Heart right ventricle (tissue), 16 donors: ENCODE measurements at regions of chr22 and their contacts with region 1.

Region 1: DNA sequence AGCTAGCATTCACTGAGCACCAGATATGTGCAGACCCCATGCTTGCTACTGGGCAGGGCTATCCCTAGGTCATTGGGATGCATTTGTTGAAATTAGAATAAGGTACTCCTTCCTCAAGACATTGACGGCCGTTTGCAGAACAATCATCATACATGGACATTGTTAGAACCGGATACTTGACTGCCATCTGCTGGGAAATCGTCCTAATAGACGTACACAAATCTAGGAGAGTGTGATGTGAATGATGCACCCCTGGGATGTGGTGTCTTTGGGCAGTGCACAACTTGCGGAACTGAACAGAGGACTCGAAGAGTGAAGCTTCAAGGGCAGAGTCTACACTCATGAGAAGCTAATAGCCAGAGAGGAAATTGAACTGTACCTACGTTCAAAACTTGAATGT is 35.9 kb downstream of the MYO18B start:
- DNase-seq: no peak
- ATAC-seq: peak in 2 of 8 donors; percentile 5 to 15
- H3K4me3 ChIP-seq: no peak overlapping the region
- H3K27ac ChIP-seq: no peak overlapping the region
- H3K4me1 ChIP-seq: peaks cover 0 to under 1% (median 0%) of the 10 kb centered on the region in 9 donors
- H3K27me3 ChIP-seq: peaks cover 0 to 5% (median 0%) of the 10 kb centered on the region in 7 donors
- CTCF ChIP-seq: peak in 6 of 9 donors; percentile 25 to 43 (median 30)

Region 2: DNA sequence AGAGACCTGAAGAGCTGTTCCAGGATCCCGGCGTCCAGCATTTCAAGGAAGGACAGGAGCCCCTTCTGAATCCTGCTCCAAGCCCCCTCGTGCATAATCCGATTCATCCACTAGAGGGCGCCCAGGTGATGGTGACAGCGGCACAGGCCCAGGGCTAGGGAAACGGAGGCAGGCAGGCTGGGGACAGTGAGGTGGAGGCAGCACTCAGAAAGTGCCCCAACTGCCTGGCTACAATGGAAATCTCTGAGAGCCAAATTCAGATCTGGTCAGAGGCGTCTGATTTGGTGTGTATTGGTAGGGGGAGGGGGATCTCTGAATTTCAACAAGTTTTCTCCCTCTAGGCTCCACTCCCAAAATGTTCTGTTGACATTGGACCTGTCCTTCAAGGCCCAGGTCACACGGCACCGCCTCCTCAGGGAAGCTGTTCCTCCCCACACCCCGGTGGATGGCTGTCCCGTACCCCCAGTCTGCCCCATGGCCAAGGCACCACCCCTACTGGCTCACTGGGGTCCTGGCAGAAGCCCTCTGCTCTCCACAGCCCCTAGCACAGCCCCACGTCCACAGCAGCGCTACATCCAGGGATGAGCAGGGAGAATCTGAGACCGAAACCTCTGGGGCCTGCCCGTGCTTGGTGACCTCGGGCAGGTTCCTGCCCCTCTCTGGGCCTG is 415.5 kb before region 1 on chr22:
- intact Hi-C with region 1: loop called in 1 of 10 experiments (anchors 10 kb)
- DNase-seq: peak; percentile 67 to 78
- ATAC-seq: peak in 7 of 8 donors; percentile 52 to 75 (median 65)
- H3K4me3 ChIP-seq: no peak overlapping the region
- H3K27ac ChIP-seq: peak overlapping the region in 1 of 10 donors; percentile 9
- H3K4me1 ChIP-seq: peaks cover 23 to 54% (median 36%) of the 10 kb centered on the region in 9 donors
- H3K27me3 ChIP-seq: no peaks in the 10 kb centered on the region
- CTCF ChIP-seq: peak; percentile 79 to 96 (median 88)

Region 3: GRCh38 chr22:25540166-25540907 is 237.5 kb before region 1 on chr22:
- intact Hi-C with region 1: loop called in 2 of 10 experiments (anchors 5 to 10 kb)
- DNase-seq: no peak
- ATAC-seq: no peak
- H3K4me3 ChIP-seq: no peak overlapping the region
- H3K27ac ChIP-seq: peak overlapping the region in 1 of 10 donors; percentile 21
- H3K4me1 ChIP-seq: peaks cover 0 to 27% (median 10%) of the 10 kb centered on the region in 9 donors
- H3K27me3 ChIP-seq: no peaks in the 10 kb centered on the region
- CTCF ChIP-seq: no peak

Region 4: DNA sequence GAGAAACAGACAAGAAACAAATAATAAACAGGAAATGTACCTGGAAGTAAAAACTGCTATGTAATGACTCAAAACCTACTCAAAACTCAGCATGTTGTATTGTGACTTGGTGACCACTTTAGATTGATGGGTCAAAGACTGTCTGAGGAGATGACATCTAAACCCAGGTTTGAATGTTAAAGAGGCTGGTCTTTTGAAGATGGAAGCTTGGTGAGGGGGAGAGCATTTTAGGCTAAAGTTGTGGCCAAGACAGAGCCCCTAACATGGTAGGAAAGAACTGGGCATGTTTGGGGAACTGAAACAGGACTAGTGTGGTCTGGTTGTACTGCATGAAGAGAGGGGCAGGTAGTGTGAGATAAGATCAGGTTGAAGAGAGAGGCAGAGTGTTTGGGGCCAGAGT is 121.1 kb before region 1 on chr22:
- intact Hi-C with region 1: no loop called
- DNase-seq: no peak
- ATAC-seq: no peak
- H3K4me3 ChIP-seq: no peak overlapping the region
- H3K27ac ChIP-seq: no peak overlapping the region
- H3K4me1 ChIP-seq: peaks cover 0 to 20% (median 13%) of the 10 kb centered on the region in 9 donors
- H3K27me3 ChIP-seq: no peaks in the 10 kb centered on the region
- CTCF ChIP-seq: no peak

Region 5: GRCh38 chr22:25702040-25702439 is 75.8 kb before region 1 on chr22:
- intact Hi-C with region 1: loop called in 3 of 10 experiments (anchors 5 to 10 kb)
- DNase-seq: no peak
- ATAC-seq: peak in 5 of 8 donors; percentile 46 to 76 (median 53)
- H3K4me3 ChIP-seq: no peak overlapping the region
- H3K27ac ChIP-seq: peak overlapping the region in 2 of 10 donors; percentile 37 to 51
- H3K4me1 ChIP-seq: peaks cover 0 to 31% (median 16%) of the 10 kb centered on the region in 9 donors
- H3K27me3 ChIP-seq: no peaks in the 10 kb centered on the region
- CTCF ChIP-seq: peak in 8 of 9 donors; percentile 23 to 70 (median 52)

Region 6: DNA sequence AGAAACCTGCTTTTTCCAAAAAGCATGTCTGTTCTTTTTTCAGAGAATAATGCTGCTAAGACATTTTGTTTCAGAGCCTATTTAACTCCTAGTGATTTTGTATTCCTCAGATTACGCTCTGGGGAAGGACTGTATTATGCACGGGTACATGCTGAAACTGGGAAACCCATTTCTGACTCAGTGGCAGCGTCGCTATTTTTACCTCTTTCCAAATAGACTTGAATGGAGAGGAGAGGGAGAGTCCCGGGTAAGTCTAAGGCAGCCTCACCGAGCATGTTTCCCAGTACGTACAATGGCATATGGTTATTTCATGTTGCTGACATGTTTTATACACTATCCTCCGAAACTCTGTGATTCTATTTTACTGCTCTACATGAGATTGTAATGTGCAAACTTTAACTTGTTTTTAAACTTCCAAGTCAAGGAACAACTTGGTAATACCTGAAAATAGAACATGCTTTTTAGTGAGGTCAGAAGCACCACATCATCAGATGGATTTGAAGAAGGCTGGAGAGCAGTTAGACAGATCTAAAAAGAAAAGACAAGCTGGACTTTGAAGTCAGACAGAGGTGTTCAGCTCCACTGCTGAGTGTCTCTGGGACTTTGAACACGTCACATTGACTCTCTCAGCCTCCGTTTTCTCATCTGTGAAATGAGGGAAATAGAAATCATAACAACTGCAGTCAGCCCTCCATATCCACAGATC is 59.6 kb before region 1 on chr22:
- intact Hi-C with region 1: loop called in 3 of 10 experiments (anchors 5 to 10 kb)
- DNase-seq: no peak
- ATAC-seq: peak in 4 of 8 donors; percentile 18 to 68 (median 34)
- H3K4me3 ChIP-seq: no peak overlapping the region
- H3K27ac ChIP-seq: peak overlapping the region in 1 of 10 donors; percentile 13
- H3K4me1 ChIP-seq: peaks cover 0 to 7% (median 0%) of the 10 kb centered on the region in 9 donors
- H3K27me3 ChIP-seq: no peaks in the 10 kb centered on the region
- CTCF ChIP-seq: no peak

Region 7: GRCh38 chr22:25736378-25737011 is 41.4 kb before region 1 on chr22:
- intact Hi-C with region 1: no loop called
- DNase-seq: no peak
- ATAC-seq: no peak
- H3K4me3 ChIP-seq: no peak overlapping the region
- H3K27ac ChIP-seq: no peak overlapping the region
- H3K4me1 ChIP-seq: peaks cover 0 to 9% (median 0%) of the 10 kb centered on the region in 9 donors
- H3K27me3 ChIP-seq: peaks cover 0 to 5% (median 0%) of the 10 kb centered on the region in 7 donors
- CTCF ChIP-seq: no peak

Region 8: GRCh38 chr22:25827415-25827814 is 49.5 kb after region 1 on chr22:
- intact Hi-C with region 1: no loop called
- DNase-seq: no peak
- ATAC-seq: no peak
- H3K4me3 ChIP-seq: no peak overlapping the region
- H3K27ac ChIP-seq: no peak overlapping the region
- H3K4me1 ChIP-seq: peaks cover 0 to 18% (median 0%) of the 10 kb centered on the region in 9 donors
- H3K27me3 ChIP-seq: no peaks in the 10 kb centered on the region
- CTCF ChIP-seq: no peak

Region 9: GRCh38 chr22:25880524-25880923 is 102.7 kb after region 1 on chr22:
- intact Hi-C with region 1: no loop called
- DNase-seq: no peak
- ATAC-seq: no peak
- H3K4me3 ChIP-seq: no peak overlapping the region
- H3K27ac ChIP-seq: no peak overlapping the region
- H3K4me1 ChIP-seq: peaks cover 0 to 6% (median 0%) of the 10 kb centered on the region in 9 donors
- H3K27me3 ChIP-seq: peaks cover 0 to 3% (median 0%) of the 10 kb centered on the region in 7 donors
- CTCF ChIP-seq: peak in 2 of 9 donors; percentile 17 to 33

Region 10: DNA sequence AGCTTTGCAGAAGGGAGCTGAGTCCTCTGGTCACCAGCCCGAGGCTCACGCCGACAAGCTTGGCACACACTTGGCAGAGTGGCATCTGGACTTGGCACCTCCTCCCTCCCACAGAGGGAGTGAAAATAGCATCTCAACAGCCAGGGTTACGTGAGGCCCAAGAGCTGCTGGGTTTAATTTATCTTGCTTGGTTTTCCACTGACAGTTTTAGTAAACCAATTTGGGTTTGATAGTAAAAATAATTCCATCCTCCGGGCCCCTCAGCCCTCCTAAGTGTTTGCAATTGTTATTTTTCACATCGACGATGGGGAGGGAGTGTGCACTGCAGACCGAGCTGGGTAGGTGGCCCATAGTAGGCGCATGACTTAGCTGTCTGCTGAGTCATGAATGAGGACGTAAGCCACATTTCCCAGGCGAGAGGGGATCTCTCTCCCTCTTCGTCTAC is 543.6 kb after region 1 on chr22:
- intact Hi-C with region 1: loop called in 1 of 10 experiments (anchors 10 kb)
- DNase-seq: peak; percentile 51 to 55
- ATAC-seq: peak; percentile 88 to 98 (median 95)
- H3K4me3 ChIP-seq: no peak overlapping the region
- H3K27ac ChIP-seq: peak overlapping the region in 7 of 10 donors; percentile 8 to 72 (median 45)
- H3K4me1 ChIP-seq: peaks cover 0 to 11% (median 0%) of the 10 kb centered on the region in 9 donors
- H3K27me3 ChIP-seq: peaks cover 0 to 10% (median 0%) of the 10 kb centered on the region in 7 donors
- CTCF ChIP-seq: no peak